MCF 10A (cell line): ENCODE measurements at regions of chr14 and their contacts with region 1.

Region 1: GRCh38 chr14:61475316-61475715 is 153.9 kb downstream of the PRKCH start:
- DNase-seq: peak; percentile 84
- H3K4me3 Mint-ChIP-seq: no peak overlapping the region
- H3K27ac Mint-ChIP-seq: no peak overlapping the region
- H3K4me1 Mint-ChIP-seq: peaks cover 58% of the 10 kb centered on the region
- H3K27me3 Mint-ChIP-seq: no peaks in the 10 kb centered on the region
- CTCF ChIP-seq: peak; percentile 46

Region 2: GRCh38 chr14:61503167-61503801 is 28.0 kb after region 1 on chr14:
- CTCF ChIA-PET with region 1: interaction called, 10 read pairs
- POLR2A ChIA-PET with region 1: interaction called, 85 read pairs
- intact Hi-C with region 1: no loop called
- DNase-seq: peak; percentile 80
- H3K4me3 Mint-ChIP-seq: peak overlapping the region; percentile 44
- H3K27ac Mint-ChIP-seq: peak overlapping the region; percentile 91
- H3K4me1 Mint-ChIP-seq: peaks cover 28% of the 10 kb centered on the region
- H3K27me3 Mint-ChIP-seq: no peaks in the 10 kb centered on the region
- CTCF ChIP-seq: no peak

Region 3: GRCh38 chr14:61537563-61538463 is 62.5 kb after region 1 on chr14:
- CTCF ChIA-PET with region 1: interaction called, 6 read pairs
- POLR2A ChIA-PET with region 1: interaction called, 11 read pairs
- intact Hi-C with region 1: no loop called
- DNase-seq: peak; percentile 97
- H3K4me3 Mint-ChIP-seq: peak overlapping the region; percentile 10
- H3K27ac Mint-ChIP-seq: peak overlapping the region; percentile 88
- H3K4me1 Mint-ChIP-seq: peaks cover 32% of the 10 kb centered on the region
- H3K27me3 Mint-ChIP-seq: no peaks in the 10 kb centered on the region
- CTCF ChIP-seq: no peak

Region 4: GRCh38 chr14:61573748-61574513 is 98.6 kb after region 1 on chr14:
- CTCF ChIA-PET with region 1: interaction called, 8 read pairs
- POLR2A ChIA-PET with region 1: interaction called, 27 read pairs
- intact Hi-C with region 1: no loop called
- DNase-seq: peak; percentile 87
- H3K4me3 Mint-ChIP-seq: peak overlapping the region; percentile 31
- H3K27ac Mint-ChIP-seq: peak overlapping the region; percentile 91
- H3K4me1 Mint-ChIP-seq: peaks cover 42% of the 10 kb centered on the region
- H3K27me3 Mint-ChIP-seq: no peaks in the 10 kb centered on the region
- CTCF ChIP-seq: no peak

Region 5: DNA sequence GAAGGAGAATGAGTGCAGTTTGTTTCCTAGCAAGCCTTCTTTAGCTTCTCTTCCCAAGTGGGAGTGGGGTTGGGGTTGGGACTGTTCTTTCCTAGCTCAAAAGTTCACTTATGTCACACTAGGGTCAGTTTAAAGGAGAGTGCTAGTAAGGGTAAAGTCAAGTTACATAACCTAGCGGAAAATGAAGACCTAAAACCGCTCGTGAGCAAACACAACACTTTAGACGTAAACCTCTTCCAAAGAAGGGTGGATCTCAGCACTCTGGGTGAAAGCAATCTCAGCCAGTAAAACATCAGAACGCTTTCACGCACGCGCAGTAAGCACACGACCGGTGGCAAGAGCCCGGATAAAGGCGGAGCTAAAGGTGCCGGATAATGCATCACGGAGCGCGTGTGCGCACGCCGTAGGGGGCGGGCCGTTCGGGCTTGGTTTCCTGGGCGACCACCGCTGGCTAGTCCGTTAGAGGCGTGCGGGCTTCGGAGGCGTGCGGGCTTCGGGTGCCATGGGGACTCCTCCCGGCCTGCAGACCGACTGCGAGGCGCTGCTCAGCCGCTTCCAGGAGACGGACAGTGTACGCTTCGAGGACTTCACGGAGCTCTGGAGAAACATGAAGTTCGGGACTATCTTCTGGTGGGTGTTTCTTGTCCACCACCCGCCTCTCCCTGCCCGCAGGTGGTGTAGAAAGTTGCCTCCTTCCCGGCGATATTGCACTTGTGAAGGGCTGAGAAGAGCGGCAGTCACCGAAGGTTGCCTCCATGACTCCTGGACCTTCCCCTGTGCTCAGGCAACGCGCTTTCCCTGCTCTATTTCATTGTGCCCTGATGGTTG is 286.9 kb after region 1 on chr14 and contains the start of gene SNAPC1:
- CTCF ChIA-PET with region 1: interaction called, 6 read pairs
- POLR2A ChIA-PET with region 1: interaction called, 20 read pairs
- intact Hi-C with region 1: no loop called
- DNase-seq: peak; percentile 99
- H3K4me3 Mint-ChIP-seq: peak within 1 kb of the TSS; percentile 92
- H3K27ac Mint-ChIP-seq: peak within 1 kb of the TSS; percentile 91
- H3K4me1 Mint-ChIP-seq: peaks cover 21% of the 10 kb centered on the region
- H3K27me3 Mint-ChIP-seq: no peaks in the 10 kb centered on the region
- CTCF ChIP-seq: no peak
- total RNA-seq, gene SNAPC1: 18.4 and 21.0 TPM in 2 replicates